Activated CD4-positive, alpha-beta T cell treated with anti-CD3 and anti-CD28 coated beads for 36 hours (primary cell): ENCODE measurements at regions of chr5 and their contacts with region 1.

Region 1: GRCh38 chr5:61408476-61409168 is 76.6 kb downstream of the ZSWIM6 start:
- DNase-seq: peak; percentile 99
- ATAC-seq: peak; percentile 99
- H3K4me3 Mint-ChIP-seq: peak overlapping the region; percentile 59
- H3K27ac Mint-ChIP-seq: peak overlapping the region; percentile 51
- H3K4me1 Mint-ChIP-seq: peaks cover 31% of the 10 kb centered on the region
- H3K27me3 Mint-ChIP-seq: no peaks in the 10 kb centered on the region

Region 2: GRCh38 chr5:60972231-60972630 is 436.4 kb before region 1 on chr5:
- CTCF ChIA-PET with region 1: no interaction called
- POLR2A ChIA-PET with region 1: no interaction called
- intact Hi-C with region 1: loop called (anchors 1 to 2 kb)
- DNase-seq: peak; percentile 75
- ATAC-seq: peak; percentile 100
- H3K4me3 Mint-ChIP-seq: no peak overlapping the region
- H3K27ac Mint-ChIP-seq: peak overlapping the region; percentile 6
- H3K4me1 Mint-ChIP-seq: peaks cover 19% of the 10 kb centered on the region
- H3K27me3 Mint-ChIP-seq: no peaks in the 10 kb centered on the region

Region 3: DNA sequence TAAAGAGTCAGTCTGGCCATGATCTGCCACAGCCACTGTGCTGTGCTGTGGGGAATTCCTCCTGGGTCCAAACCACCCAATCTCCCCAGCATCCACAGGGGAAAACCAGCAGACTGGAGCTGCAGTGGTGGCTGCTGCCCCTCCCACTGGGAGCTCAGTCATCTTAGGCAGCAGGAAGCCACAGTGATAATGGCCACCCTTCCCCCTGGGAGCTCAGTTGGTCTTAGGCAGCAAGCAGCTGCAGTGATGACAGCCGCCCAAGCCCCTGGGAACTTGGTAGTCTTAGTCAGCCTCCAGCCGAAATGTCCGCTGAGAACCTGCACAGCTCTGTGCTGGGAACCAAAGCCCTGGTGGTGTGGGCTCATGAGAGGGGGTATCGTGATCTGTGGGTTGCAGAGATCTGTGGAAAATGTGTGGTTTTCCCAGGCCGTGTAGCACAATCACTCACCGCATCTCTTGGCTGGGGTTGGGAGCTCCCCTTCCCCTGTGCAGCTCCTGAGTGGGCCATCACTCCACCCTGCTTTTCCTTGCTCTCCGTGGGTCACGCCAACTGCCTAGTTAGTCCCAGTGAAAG is 208.0 kb before region 1 on chr5:
- CTCF ChIA-PET with region 1: interaction called, 3 read pairs
- POLR2A ChIA-PET with region 1: no interaction called
- intact Hi-C with region 1: loop called (anchors 2 kb)
- DNase-seq: no peak
- ATAC-seq: no peak
- H3K4me3 Mint-ChIP-seq: no peak overlapping the region
- H3K27ac Mint-ChIP-seq: no peak overlapping the region
- H3K4me1 Mint-ChIP-seq: peaks cover 14% of the 10 kb centered on the region
- H3K27me3 Mint-ChIP-seq: peaks cover 39% of the 10 kb centered on the region

Region 4: GRCh38 chr5:61477788-61478187 is 69.2 kb after region 1 on chr5:
- CTCF ChIA-PET with region 1: no interaction called
- POLR2A ChIA-PET with region 1: no interaction called
- intact Hi-C with region 1: no loop called
- DNase-seq: no peak
- ATAC-seq: no peak
- H3K4me3 Mint-ChIP-seq: no peak overlapping the region
- H3K27ac Mint-ChIP-seq: no peak overlapping the region
- H3K4me1 Mint-ChIP-seq: no peaks in the 10 kb centered on the region
- H3K27me3 Mint-ChIP-seq: no peaks in the 10 kb centered on the region

Region 5: GRCh38 chr5:61578858-61579503 is 170.4 kb after region 1 on chr5:
- CTCF ChIA-PET with region 1: no interaction called
- POLR2A ChIA-PET with region 1: no interaction called
- intact Hi-C with region 1: loop called in 1 of 2 experiments (anchors 1 kb)
- DNase-seq: no peak
- ATAC-seq: peak; percentile 87
- H3K4me3 Mint-ChIP-seq: no peak overlapping the region
- H3K27ac Mint-ChIP-seq: no peak overlapping the region
- H3K4me1 Mint-ChIP-seq: no peaks in the 10 kb centered on the region
- H3K27me3 Mint-ChIP-seq: peaks cover 4% of the 10 kb centered on the region